ENCODE measurements at regions of chr14 and their contacts with region 1.

Region 1: DNA sequence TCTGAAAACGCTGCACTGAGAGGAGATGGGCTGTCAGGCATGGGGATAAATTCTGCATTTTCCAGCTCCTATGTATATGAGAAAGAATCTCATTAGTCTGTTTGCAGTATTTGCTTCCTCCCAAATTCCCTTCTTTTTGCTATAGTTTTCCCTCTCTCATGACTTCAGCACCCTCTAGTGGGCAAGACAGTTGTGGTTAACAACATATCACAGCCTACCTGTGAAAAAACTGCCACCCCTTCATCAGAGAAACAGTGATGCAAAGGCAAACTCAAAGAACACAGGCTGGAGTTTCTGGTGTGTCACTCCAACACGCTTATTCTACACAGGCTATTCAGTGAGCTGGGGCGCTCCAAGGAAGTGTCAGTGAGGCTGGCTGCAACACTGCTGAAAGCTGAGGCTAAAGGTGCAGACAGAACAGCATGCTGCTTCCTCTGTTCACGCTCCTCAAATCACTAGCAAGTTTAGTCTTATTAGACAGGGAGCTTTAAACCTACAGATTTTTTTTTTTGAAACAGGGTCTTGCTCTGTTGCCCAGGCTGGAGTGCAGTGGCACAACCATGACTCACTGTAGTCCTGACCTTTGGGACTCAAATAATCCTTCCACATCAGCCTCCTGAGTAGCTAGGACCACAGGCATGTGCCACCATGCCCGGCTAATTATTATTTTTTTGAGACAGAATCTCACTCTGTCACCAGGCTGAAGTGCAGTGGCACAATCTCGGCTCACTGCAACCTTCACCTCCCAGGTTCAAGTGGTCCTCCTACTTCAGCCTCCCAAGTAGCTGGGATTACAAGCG is 19.3 kb downstream of the ZC2HC1C start:
- DNase-seq: peak; percentile 70
- H3K4me3 ChIP-seq: no peak overlapping the region
- H3K27ac ChIP-seq: no peak overlapping the region
- H3K4me1 ChIP-seq: peaks cover 4% of the 10 kb centered on the region
- H3K27me3 ChIP-seq: no peaks in the 10 kb centered on the region
- CTCF ChIP-seq: peak; percentile 62 to 74
- POLR2A ChIP-seq: no peak

Region 2: DNA sequence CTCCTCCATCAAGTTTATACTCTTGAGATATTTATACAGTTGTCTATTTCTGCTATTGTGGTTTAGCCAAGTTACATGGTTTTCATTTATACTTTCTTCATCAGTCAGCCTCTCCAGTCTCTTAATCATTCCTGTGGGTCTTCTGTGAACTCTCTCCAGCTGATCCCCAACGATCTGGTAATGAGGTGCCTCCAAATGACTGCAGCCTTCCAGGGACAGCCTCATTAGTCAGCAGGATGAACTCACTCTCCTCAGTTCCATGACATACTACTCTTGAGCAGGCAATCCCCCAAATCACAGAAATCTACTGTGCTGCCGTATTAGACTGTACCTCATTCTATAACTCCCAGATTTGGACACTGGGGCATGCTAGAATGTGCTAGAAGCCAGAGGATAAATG is 391.2 kb before region 1 on chr14:
- CTCF ChIA-PET with region 1: no interaction called
- POLR2A ChIA-PET with region 1: no interaction called
- dilution Hi-C with region 1: no loop called
- intact Hi-C with region 1: no loop called
- DNase-seq: no peak
- H3K4me3 ChIP-seq: no peak overlapping the region
- H3K27ac ChIP-seq: no peak overlapping the region
- H3K4me1 ChIP-seq: no peaks in the 10 kb centered on the region
- H3K27me3 ChIP-seq: no peaks in the 10 kb centered on the region
- CTCF ChIP-seq: no peak
- POLR2A ChIP-seq: no peak

Region 3: GRCh38 chr14:74881431-74882361 is 207.1 kb before region 1 on chr14 and contains the start of gene DLST:
- CTCF ChIA-PET with region 1: interaction called, 14 read pairs
- POLR2A ChIA-PET with region 1: interaction called, 7 read pairs
- dilution Hi-C with region 1: no loop called
- intact Hi-C with region 1: no loop called
- DNase-seq: peak; percentile 87
- H3K4me3 ChIP-seq: peak within 1 kb of the TSS; percentile 49 to 95 (median 93)
- H3K27ac ChIP-seq: peak within 1 kb of the TSS; percentile 74
- H3K4me1 ChIP-seq: peaks cover 24% of the 10 kb centered on the region
- H3K27me3 ChIP-seq: no peaks in the 10 kb centered on the region
- CTCF ChIP-seq: no peak
- POLR2A ChIP-seq: peak; percentile 96
- total RNA-seq, gene DLST: 105 and 110 TPM in 2 replicates

Region 4: DNA sequence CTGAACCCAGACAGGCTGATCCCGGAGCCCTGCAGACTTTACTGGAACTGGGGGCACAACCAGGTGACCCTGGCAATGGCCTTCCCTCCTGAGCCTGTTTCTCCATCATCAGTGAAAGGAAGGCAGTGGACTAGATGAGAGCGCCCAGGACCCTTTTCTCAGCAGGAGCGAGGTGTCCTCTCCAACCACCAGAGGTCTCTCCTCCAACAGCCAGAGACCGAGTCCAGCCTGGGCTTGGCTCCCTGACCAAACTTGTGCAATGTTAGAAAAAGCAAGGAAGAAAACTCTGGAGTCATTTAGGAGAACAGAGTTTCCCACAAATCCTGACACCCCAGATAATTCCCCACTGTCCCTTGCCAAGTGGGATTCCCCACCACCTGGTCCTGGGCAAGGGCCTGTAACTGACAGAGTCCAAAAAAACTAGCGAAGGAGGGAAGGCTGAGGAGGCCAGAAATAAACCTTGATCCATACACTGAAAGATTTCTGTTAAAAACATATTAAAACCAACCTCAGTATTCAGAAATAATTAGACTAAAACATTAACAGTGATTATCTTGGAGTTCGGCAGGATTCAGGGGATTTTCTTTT is 174.7 kb before region 1 on chr14:
- CTCF ChIA-PET with region 1: interaction called, 67 read pairs
- POLR2A ChIA-PET with region 1: interaction called, 3 read pairs
- dilution Hi-C with region 1: no loop called
- intact Hi-C with region 1: loop called (anchors 1 kb)
- DNase-seq: peak; percentile 66
- H3K4me3 ChIP-seq: no peak overlapping the region
- H3K27ac ChIP-seq: no peak overlapping the region
- H3K4me1 ChIP-seq: peaks cover 3% of the 10 kb centered on the region
- H3K27me3 ChIP-seq: no peaks in the 10 kb centered on the region
- CTCF ChIP-seq: peak; percentile 85 to 87
- POLR2A ChIP-seq: no peak

Region 5: GRCh38 chr14:74932401-74932901 is 156.3 kb before region 1 on chr14:
- CTCF ChIA-PET with region 1: interaction called, 11 read pairs
- POLR2A ChIA-PET with region 1: no interaction called
- dilution Hi-C with region 1: no loop called
- intact Hi-C with region 1: no loop called
- DNase-seq: peak; percentile 93
- H3K4me3 ChIP-seq: no peak overlapping the region
- H3K27ac ChIP-seq: peak overlapping the region; percentile 48
- H3K4me1 ChIP-seq: peaks cover 7% of the 10 kb centered on the region
- H3K27me3 ChIP-seq: no peaks in the 10 kb centered on the region
- CTCF ChIP-seq: no peak
- POLR2A ChIP-seq: no peak

Region 6: DNA sequence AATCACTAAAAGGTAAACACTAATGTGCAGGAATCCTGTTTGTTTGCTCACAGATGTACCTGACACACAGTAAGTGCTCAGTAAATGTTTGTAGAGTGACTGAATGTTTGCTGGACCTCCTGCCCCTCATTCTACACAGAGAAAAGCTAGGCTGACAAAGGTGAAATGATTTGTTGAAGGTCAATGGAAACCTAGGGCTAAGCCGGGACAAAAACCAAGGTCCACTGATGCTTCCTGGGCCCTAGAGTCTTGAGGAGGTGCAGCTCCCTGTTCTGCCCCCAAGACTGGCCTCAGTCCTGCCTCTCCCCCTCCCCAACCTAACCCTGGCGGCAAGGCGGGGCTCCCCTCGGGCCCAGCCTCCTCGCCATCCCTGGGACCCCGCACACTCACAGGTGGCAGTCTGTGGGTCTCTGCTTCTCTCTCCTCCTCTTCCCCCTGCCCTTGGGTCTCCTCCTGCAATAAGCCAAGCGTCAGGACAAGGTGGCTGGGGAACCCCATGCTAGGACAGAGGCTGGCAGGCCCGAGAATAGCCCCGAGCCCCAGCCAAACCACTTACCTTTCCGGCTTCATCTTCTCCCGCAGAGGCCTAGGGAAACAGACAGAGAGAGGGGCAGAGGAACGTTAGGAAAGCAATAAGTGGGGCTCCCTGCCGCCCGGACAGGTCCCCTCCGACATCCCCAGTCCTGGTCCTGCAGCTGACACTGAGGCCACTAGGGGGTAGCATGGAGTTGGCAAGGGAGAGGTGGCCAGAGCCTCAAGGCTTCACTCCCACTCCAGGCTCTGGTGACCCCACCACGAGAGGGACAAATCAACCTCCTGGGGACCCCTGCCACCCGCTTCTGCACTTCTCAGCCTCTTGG is 142.7 kb before region 1 on chr14:
- CTCF ChIA-PET with region 1: interaction called, 73 read pairs
- POLR2A ChIA-PET with region 1: interaction called, 6 read pairs
- dilution Hi-C with region 1: no loop called
- intact Hi-C with region 1: loop called (anchors 1 kb)
- DNase-seq: peak; percentile 69
- H3K4me3 ChIP-seq: no peak overlapping the region
- H3K27ac ChIP-seq: peak overlapping the region; percentile 30
- H3K4me1 ChIP-seq: peaks cover 39% of the 10 kb centered on the region
- H3K27me3 ChIP-seq: no peaks in the 10 kb centered on the region
- CTCF ChIP-seq: peak; percentile 80 to 96
- POLR2A ChIP-seq: no peak

Region 7: GRCh38 chr14:75002392-75003249 is 86.2 kb before region 1 on chr14 and contains the start of gene EIF2B2:
- CTCF ChIA-PET with region 1: interaction called, 10 read pairs
- POLR2A ChIA-PET with region 1: no interaction called
- dilution Hi-C with region 1: no loop called
- intact Hi-C with region 1: no loop called
- DNase-seq: peak; percentile 96
- H3K4me3 ChIP-seq: peak within 1 kb of the TSS; percentile 43 to 76 (median 59)
- H3K27ac ChIP-seq: peak within 1 kb of the TSS; percentile 64
- H3K4me1 ChIP-seq: peaks cover 26% of the 10 kb centered on the region
- H3K27me3 ChIP-seq: no peaks in the 10 kb centered on the region
- CTCF ChIP-seq: no peak
- POLR2A ChIP-seq: peak; percentile 55
- total RNA-seq, gene EIF2B2: 97.0 and 103 TPM in 2 replicates

Region 8: DNA sequence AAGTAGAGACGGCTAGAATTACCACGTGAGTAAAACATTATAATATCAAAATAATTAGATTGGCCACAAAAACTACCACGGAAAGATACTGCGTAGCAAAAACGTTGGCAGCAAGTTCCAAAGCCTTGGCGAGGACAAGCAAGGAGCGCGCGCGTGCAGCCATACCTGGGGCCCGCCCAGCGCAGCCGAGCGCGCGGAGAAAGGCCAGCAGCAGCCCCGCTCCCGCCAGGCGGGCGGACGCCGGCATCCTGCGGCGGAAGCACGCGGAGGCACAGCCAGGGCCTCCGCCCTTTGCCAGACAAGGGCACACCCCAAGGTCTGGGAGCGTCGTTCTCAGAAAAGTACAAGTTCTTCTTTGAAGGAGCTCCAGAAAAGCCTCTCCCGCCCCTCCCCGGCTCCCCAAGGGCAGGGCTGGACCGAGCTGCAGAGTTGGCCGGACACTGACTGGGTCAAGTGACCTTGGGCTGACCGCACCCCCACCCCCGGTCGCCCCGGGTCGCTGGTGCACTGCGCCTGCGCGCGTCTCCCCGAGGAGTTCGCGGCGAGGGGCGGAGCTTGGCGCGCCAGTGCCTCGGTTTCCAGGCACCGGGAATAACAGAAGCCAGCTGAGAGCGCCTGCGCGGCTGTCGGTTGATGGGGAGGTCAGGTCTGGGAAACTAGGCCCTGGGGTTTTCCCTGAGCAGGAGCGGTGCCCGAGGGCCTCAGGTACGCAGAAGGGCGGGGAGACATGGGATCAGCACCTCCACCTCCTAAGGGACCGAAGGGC is 19.5 kb before region 1 on chr14 and contains the start of gene ZC2HC1C:
- CTCF ChIA-PET with region 1: interaction called, 11 read pairs
- POLR2A ChIA-PET with region 1: no interaction called
- dilution Hi-C with region 1: no loop called
- intact Hi-C with region 1: no loop called
- DNase-seq: peak; percentile 91
- H3K4me3 ChIP-seq: peak within 1 kb of the TSS; percentile 31 to 69 (median 59)
- H3K27ac ChIP-seq: peak within 1 kb of the TSS; percentile 86
- H3K4me1 ChIP-seq: peaks cover 14% of the 10 kb centered on the region
- H3K27me3 ChIP-seq: no peaks in the 10 kb centered on the region
- CTCF ChIP-seq: no peak
- POLR2A ChIP-seq: peak; percentile 77
- total RNA-seq, gene ZC2HC1C: 0.91 and 3.6 TPM in 2 replicates

Measured in endothelial cell of umbilical vein (primary cell).